ENCODE measurements at regions of chr7 and their contacts with region 1.

Region 1: GRCh38 chr7:77657427-77658224 is 38.6 kb upstream of the RSBN1L start:
- DNase-seq: no peak
- ATAC-seq: peak; percentile 60
- H3K4me3 Mint-ChIP-seq: no peak overlapping the region
- H3K27ac Mint-ChIP-seq: no peak overlapping the region
- H3K4me1 Mint-ChIP-seq: no peaks in the 10 kb centered on the region
- H3K27me3 Mint-ChIP-seq: no peaks in the 10 kb centered on the region
- CTCF ChIP-seq: peak; percentile 82

Region 2: GRCh38 chr7:77696198-77697028 is 38.8 kb after region 1 on chr7 and contains the start of gene RSBN1L:
- CTCF ChIA-PET with region 1: interaction called, 11 read pairs
- POLR2A ChIA-PET with region 1: no interaction called
- intact Hi-C with region 1: no loop called
- DNase-seq: peak; percentile 99
- ATAC-seq: peak; percentile 98
- H3K4me3 Mint-ChIP-seq: peak within 1 kb of the TSS; percentile 99
- H3K27ac Mint-ChIP-seq: peak within 1 kb of the TSS; percentile 97
- H3K4me1 Mint-ChIP-seq: peaks cover 44% of the 10 kb centered on the region
- H3K27me3 Mint-ChIP-seq: no peaks in the 10 kb centered on the region
- CTCF ChIP-seq: peak; percentile 36
- total RNA-seq, gene RSBN1L: 16.5 to 21.9 TPM

Region 3: DNA sequence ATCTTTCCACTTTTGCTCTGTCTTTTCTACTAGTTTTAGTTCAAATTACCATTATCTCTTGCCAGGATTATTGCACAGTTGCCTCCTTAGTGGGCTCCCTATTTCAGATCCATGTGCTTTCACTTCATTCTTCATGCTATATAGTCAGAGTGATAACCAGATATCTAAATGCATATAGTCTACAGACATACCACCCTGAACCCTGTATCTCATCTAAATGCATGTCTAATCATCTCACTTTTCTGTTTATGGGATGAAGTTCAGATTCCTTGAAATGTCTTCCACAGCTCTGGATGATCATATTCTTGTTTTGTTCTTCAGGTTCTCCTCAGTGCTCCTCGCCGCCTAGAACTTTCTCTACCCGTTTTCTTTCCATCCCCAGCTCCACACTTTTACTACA is 52.4 kb after region 1 on chr7:
- CTCF ChIA-PET with region 1: no interaction called
- POLR2A ChIA-PET with region 1: no interaction called
- intact Hi-C with region 1: no loop called
- DNase-seq: no peak
- ATAC-seq: no peak
- H3K4me3 Mint-ChIP-seq: no peak overlapping the region
- H3K27ac Mint-ChIP-seq: peak overlapping the region; percentile 28
- H3K4me1 Mint-ChIP-seq: peaks cover 42% of the 10 kb centered on the region
- H3K27me3 Mint-ChIP-seq: no peaks in the 10 kb centered on the region
- CTCF ChIP-seq: no peak

Region 4: GRCh38 chr7:77753173-77753572 is 95.5 kb after region 1 on chr7:
- CTCF ChIA-PET with region 1: interaction called, 96 read pairs
- POLR2A ChIA-PET with region 1: no interaction called
- intact Hi-C with region 1: loop called (anchors 2 kb)
- DNase-seq: no peak
- ATAC-seq: no peak
- H3K4me3 Mint-ChIP-seq: no peak overlapping the region
- H3K27ac Mint-ChIP-seq: no peak overlapping the region
- H3K4me1 Mint-ChIP-seq: peaks cover 49% of the 10 kb centered on the region
- H3K27me3 Mint-ChIP-seq: no peaks in the 10 kb centered on the region
- CTCF ChIP-seq: no peak

Region 5: GRCh38 chr7:77759294-77759889 is 101.8 kb after region 1 on chr7:
- CTCF ChIA-PET with region 1: interaction called, 176 read pairs
- POLR2A ChIA-PET with region 1: no interaction called
- intact Hi-C with region 1: loop called (anchors 2 kb)
- DNase-seq: peak; percentile 83
- ATAC-seq: peak; percentile 76
- H3K4me3 Mint-ChIP-seq: no peak overlapping the region
- H3K27ac Mint-ChIP-seq: no peak overlapping the region
- H3K4me1 Mint-ChIP-seq: peaks cover 36% of the 10 kb centered on the region
- H3K27me3 Mint-ChIP-seq: no peaks in the 10 kb centered on the region
- CTCF ChIP-seq: peak; percentile 96

Region 6: GRCh38 chr7:77765906-77766800 is 108.5 kb after region 1 on chr7:
- CTCF ChIA-PET with region 1: interaction called, 176 read pairs
- POLR2A ChIA-PET with region 1: no interaction called
- intact Hi-C with region 1: no loop called
- DNase-seq: no peak
- ATAC-seq: no peak
- H3K4me3 Mint-ChIP-seq: no peak overlapping the region
- H3K27ac Mint-ChIP-seq: no peak overlapping the region
- H3K4me1 Mint-ChIP-seq: peaks cover 16% of the 10 kb centered on the region
- H3K27me3 Mint-ChIP-seq: no peaks in the 10 kb centered on the region
- CTCF ChIP-seq: no peak

Region 7: DNA sequence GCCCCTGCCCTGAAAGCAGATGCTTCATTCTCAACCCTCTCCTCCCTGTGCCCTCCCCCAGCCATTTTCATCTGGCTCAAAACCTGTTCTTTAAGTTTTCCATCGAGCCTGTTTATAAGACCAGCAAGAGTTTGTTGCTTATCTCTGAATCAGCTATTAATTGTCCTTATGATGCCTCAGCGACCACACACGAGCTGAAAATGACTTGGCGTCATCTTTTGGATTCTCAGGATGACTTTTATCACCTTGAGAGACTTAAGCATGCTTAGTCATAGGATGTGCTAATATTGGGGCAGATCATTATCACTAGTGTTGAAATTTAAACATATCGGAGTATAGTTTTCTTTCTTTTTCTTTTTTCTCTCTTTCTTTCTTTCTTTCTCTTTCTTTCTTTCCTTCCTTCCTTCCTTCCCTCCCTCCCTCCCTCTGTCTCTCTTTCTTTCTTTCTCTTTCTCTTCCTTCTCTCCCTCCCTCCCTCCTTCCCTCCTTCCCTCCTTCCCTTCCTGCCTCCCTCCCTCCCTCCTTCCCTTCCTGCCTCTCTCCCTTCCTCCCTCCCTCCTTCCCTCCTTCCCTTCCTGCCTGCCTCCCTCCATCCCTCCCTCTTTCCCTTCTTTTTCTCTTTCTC is 325.4 kb after region 1 on chr7:
- CTCF ChIA-PET with region 1: no interaction called
- POLR2A ChIA-PET with region 1: no interaction called
- intact Hi-C with region 1: no loop called
- DNase-seq: peak; percentile 40
- ATAC-seq: peak; percentile 53
- H3K4me3 Mint-ChIP-seq: no peak overlapping the region
- H3K27ac Mint-ChIP-seq: no peak overlapping the region
- H3K4me1 Mint-ChIP-seq: no peaks in the 10 kb centered on the region
- H3K27me3 Mint-ChIP-seq: peaks cover 11% of the 10 kb centered on the region
- CTCF ChIP-seq: no peak

Region 8: GRCh38 chr7:78039790-78040776 is 382.5 kb after region 1 on chr7:
- CTCF ChIA-PET with region 1: interaction called, 38 read pairs
- POLR2A ChIA-PET with region 1: no interaction called
- intact Hi-C with region 1: loop called (anchors 10 kb)
- DNase-seq: peak; percentile 68
- ATAC-seq: peak; percentile 93
- H3K4me3 Mint-ChIP-seq: no peak overlapping the region
- H3K27ac Mint-ChIP-seq: no peak overlapping the region
- H3K4me1 Mint-ChIP-seq: peaks cover 3% of the 10 kb centered on the region
- H3K27me3 Mint-ChIP-seq: peaks cover 20% of the 10 kb centered on the region
- CTCF ChIP-seq: peak; percentile 97

Measured in activated CD8-positive, alpha-beta T cell treated with anti-CD3 and anti-CD28 coated beads for 36 hours (primary cell).